ENCODE measurements at regions of chr18 and their contacts with region 1.

Region 1: GRCh38 chr18:45664824-45665763 is 49.8 kb downstream of the SLC14A2 start:
- DNase-seq: peak; percentile 70
- H3K4me3 Mint-ChIP-seq: no peak overlapping the region
- H3K27ac Mint-ChIP-seq: peak overlapping the region; percentile 76
- H3K4me1 Mint-ChIP-seq: peaks cover 50% of the 10 kb centered on the region
- H3K27me3 Mint-ChIP-seq: peaks cover 3% of the 10 kb centered on the region

Region 2: GRCh38 chr18:45690975-45691815 is 26.1 kb after region 1 on chr18:
- CTCF ChIA-PET with region 1: interaction called, 108 read pairs
- POLR2A ChIA-PET with region 1: interaction called, 67 read pairs
- DNase-seq: peak; percentile 78
- H3K4me3 Mint-ChIP-seq: no peak overlapping the region
- H3K27ac Mint-ChIP-seq: no peak overlapping the region
- H3K4me1 Mint-ChIP-seq: peaks cover 42% of the 10 kb centered on the region
- H3K27me3 Mint-ChIP-seq: peaks cover 32% of the 10 kb centered on the region

Region 3: DNA sequence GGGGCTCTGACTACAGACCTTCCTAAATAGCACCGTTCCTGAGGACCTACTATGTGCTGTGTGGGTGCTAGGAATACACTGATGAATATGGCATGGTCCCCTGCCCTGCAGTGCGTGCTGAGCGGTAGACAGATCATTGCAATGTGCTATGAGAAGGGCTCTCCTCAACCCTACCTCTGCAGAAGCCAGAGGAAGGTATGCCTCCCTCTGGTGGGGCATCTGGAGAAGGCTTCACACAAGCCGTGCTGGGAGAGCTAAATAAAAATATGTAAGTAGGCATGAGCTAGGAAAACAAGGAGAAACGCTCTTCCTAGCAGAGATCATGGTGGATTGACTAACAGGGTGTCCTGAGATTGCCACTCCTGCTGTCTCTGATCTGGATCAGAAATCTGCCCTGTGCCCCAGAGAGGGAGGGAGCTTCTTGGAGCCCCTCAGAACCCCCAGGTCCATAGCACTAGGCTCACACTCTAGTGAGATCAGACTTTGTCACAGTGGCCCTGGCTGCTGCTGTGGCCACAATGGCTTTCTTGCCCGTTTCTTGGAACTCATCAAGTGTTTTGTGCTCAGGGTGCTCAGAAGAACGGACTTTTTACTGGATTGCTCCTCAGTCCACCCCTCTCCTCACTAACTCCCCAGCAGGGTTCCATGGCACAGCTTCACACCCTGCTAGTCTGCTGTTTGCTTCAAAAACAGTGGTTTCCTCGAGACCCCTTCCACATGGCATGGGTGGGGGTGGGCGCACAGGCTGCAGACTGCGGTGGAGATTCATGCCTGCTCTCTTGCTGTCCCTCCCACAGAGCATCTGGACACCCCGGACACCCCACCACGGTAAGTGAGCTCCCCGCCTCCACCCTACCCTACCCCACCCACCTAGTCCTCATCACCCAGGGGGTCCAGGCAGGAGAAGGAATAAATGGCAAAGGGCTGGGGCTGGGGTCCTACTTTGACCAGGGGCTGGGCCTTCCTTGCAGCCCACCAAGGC is 174.6 kb after region 1 on chr18:
- CTCF ChIA-PET with region 1: interaction called, 16 read pairs
- POLR2A ChIA-PET with region 1: no interaction called
- DNase-seq: peak; percentile 30
- H3K4me3 Mint-ChIP-seq: no peak overlapping the region
- H3K27ac Mint-ChIP-seq: no peak overlapping the region
- H3K4me1 Mint-ChIP-seq: peaks cover 6% of the 10 kb centered on the region
- H3K27me3 Mint-ChIP-seq: peaks cover 49% of the 10 kb centered on the region

Region 4: DNA sequence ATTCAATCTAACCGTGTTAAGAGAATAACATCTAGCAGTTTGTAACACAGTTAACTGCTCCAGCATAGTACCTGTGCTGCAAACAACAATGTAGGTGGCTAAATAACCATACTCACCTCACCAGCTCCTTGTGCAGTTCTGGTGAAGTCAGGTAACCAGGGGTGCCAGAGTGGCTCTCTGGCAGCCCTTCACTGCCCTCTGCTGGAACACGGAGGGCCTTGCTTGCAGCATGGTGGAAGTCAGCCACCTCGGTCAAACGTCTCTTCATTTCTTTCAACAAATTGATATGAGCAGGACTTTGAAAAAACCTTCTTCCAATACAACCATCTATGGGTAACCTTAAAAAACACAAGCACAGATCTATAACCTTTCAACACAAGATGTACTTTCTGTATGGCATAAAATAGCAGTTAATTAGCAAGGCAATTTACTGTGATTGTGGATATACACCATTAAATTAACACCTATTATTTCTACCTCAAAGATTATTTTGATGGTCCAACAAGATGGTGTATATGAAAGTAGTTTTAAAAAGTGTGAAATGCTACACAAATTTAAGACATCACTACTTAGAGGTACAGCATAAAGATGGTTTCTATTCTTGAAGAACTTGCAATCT is 245.4 kb after region 1 on chr18:
- CTCF ChIA-PET with region 1: interaction called, 39 read pairs
- POLR2A ChIA-PET with region 1: no interaction called
- DNase-seq: peak; percentile 70
- H3K4me3 Mint-ChIP-seq: no peak overlapping the region
- H3K27ac Mint-ChIP-seq: no peak overlapping the region
- H3K4me1 Mint-ChIP-seq: no peaks in the 10 kb centered on the region
- H3K27me3 Mint-ChIP-seq: no peaks in the 10 kb centered on the region